Esophagus squamous epithelium (tissue), 5 donors: ENCODE measurements at regions of chr18 and their contacts with region 1.

Region 1: GRCh38 chr18:2932247-2933181 is 80.4 kb downstream of the LPIN2 start:
- DNase-seq: no peak
- H3K4me3 ChIP-seq: no peak overlapping the region
- H3K27ac ChIP-seq: no peak overlapping the region
- H3K4me1 ChIP-seq: no peaks in the 10 kb centered on the region
- H3K27me3 ChIP-seq: no peaks in the 10 kb centered on the region
- CTCF ChIP-seq: peak; percentile 50 to 79 (median 72)
- POLR2A ChIP-seq: no peak

Region 2: GRCh38 chr18:2985628-2986027 is 53.1 kb after region 1 on chr18:
- intact Hi-C with region 1: loop called (anchors 10 kb)
- DNase-seq: no peak
- H3K4me3 ChIP-seq: no peak overlapping the region
- H3K27ac ChIP-seq: no peak overlapping the region
- H3K4me1 ChIP-seq: peaks cover 0 to 40% (median 30%) of the 10 kb centered on the region in 3 donors
- H3K27me3 ChIP-seq: no peaks in the 10 kb centered on the region
- CTCF ChIP-seq: peak; percentile 20 to 56 (median 42)
- POLR2A ChIP-seq: no peak

Region 3: GRCh38 chr18:3029215-3029952 is 96.9 kb after region 1 on chr18:
- intact Hi-C with region 1: no loop called
- DNase-seq: no peak
- H3K4me3 ChIP-seq: no peak overlapping the region
- H3K27ac ChIP-seq: no peak overlapping the region
- H3K4me1 ChIP-seq: peaks cover 0 to 9% (median 0%) of the 10 kb centered on the region in 3 donors
- H3K27me3 ChIP-seq: no peaks in the 10 kb centered on the region
- CTCF ChIP-seq: no peak
- POLR2A ChIP-seq: no peak

Region 4: DNA sequence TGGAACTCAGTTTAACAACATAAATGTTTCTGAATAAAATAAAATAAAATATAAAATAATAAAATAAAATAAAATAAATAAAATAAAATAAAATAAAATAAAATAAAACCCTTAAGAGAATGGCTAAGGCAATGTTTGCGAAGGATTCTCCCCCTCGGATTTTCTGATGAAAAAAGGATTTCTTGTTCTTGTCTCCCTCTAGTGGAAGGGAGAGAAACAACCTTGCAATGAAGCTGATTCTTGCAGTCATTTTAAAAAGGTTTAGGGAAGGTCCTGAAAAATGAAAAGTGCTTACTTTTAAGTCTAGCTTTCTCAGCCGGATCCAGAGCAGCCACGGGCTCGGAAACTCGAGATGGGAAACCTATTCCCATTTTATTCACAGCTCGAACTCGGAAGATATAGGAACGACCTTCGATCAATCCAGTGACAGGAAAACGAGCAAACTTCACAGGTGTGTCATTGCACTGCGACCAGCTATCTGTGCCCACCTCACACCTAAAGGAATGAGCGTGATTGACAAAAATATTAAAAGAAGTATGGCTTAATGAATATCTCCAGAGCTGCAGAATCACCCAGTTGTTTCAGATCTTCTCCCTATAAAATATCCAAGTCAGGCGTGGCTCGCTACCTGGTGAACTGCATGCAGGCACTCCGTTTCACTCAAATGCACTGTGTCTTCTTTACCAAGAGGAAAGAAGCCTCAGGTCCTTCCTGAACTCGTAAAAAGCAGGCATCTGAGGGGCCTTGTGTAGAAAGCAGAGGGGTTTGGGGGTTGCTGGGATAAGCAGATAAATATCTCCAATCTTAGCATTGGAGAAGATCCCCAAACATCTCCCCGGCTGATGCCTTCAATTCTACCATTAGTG is 219.1 kb after region 1 on chr18:
- intact Hi-C with region 1: loop called (anchors 10 kb)
- DNase-seq: no peak
- H3K4me3 ChIP-seq: no peak overlapping the region
- H3K27ac ChIP-seq: no peak overlapping the region
- H3K4me1 ChIP-seq: peaks cover 0 to 10% (median 0%) of the 10 kb centered on the region in 3 donors
- H3K27me3 ChIP-seq: no peaks in the 10 kb centered on the region
- CTCF ChIP-seq: peak; percentile 43 to 73 (median 63)
- POLR2A ChIP-seq: no peak

Region 5: DNA sequence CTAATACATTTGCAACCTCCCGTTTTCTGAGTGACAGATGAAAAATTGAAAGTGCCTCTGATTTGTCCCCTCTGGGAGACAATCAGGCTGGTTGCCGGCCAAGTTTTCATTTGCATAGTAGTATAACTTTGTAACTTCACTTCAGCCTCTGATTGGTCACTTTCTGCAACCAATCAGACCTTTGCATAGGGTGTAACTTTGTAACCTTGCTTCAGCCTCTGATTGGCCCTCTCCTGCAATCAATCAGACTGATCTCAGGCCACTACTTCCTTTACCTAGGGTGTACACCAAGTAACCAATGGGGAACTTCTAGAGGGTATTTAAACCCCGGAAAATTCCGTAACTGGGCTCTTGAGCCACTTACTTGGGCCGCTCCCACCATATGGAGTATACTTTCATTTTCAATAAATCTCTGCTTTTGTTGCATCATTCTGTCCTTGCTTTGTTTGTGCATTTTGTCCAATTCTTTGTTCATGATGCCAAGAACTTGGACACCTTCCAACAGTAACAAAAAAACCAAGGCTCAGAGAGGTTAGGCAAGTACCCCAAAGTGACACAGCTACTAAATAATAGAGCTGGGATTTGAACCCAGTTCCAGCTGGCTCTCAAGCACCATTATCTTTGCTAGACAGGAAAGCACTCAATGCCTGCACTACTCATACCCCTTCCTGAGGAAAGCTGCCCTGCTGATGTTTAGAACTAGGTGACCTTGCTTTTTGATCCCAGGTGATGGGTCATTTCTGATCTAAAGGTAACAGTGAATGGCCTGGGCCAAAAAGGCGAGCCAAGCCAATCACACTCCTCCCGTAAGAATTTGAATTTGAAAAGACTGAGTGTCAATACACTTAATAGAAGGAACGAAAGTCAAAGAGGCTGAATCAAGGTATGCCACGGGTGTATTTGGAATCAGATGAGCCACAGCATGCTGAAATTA is 298.2 kb after region 1 on chr18:
- intact Hi-C with region 1: loop called (anchors 5 kb)
- DNase-seq: no peak
- H3K4me3 ChIP-seq: no peak overlapping the region
- H3K27ac ChIP-seq: no peak overlapping the region
- H3K4me1 ChIP-seq: peaks cover 0 to 9% (median 0%) of the 10 kb centered on the region in 3 donors
- H3K27me3 ChIP-seq: no peaks in the 10 kb centered on the region
- CTCF ChIP-seq: no peak
- POLR2A ChIP-seq: no peak